PC-3 (cell line): ENCODE measurements at regions of chr18 and their contacts with region 1.

Region 1: DNA sequence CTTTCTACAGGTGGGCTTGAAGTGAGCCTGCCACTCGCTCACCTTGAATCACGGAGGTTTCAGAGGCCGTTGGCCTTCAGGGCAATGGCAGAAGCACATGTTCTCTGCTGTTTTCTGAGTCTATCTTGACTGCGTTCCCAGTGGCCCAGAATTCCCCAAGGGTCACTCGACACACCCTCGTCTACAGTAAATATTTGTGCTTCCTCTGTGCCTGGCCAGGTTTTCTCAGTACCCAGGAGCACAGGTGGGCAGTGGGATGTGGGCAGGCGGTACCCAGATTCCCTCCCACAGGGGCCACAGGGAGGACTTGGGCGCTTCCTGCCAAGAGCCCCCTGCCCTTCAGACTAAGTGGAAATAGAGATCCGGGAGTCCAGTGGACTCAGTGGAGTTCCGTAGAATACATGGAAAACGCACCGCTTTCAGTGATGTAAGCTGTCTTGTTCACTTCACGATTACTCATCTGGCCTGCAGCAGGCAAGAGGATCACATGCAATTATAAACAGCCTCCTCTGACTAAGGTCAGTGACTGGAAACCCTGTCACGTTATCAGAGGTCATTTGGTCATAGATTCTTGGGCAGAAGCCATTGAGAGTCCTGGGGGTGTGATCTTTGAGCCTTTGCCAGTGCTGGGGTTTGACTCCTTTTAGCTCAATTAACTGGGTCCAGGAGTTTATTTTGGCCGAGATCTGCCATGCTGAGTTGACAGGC is 179.8 kb downstream of the NEDD4L start:
- DNase-seq: peak; percentile 91
- ATAC-seq: peak; percentile 72
- H3K4me3 ChIP-seq: peak overlapping the region; percentile 93
- H3K27ac ChIP-seq: peak overlapping the region; percentile 86
- H3K4me1 ChIP-seq: peaks cover 54% of the 10 kb centered on the region
- H3K27me3 ChIP-seq: no peaks in the 10 kb centered on the region
- CTCF ChIP-seq: no peak

Region 2: DNA sequence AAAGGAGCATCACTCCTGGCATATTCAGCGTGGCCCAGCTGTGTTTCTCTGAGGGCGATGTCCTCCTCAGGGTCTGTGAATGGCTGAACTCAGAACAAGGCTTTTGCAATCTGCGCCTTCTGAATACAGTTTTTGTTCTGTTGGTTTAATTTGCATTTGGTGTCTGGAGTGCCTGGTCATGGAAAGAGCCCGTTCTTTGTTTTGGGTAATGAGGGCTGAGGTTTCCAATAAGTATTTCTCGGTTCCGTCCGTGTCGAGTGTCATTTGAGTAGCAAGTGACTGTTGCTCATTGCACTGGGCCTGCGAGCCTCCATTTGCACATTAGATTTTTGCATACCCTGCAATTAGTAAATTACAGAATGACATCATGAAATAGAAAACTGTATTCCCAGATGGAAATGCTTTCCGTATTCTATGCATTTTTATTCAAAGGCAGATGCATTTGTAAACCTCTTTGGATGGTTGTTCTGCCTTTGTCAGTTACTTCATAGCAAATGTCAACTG is 122.5 kb before region 1 on chr18:
- CTCF ChIA-PET with region 1: no interaction called
- POLR2A ChIA-PET with region 1: no interaction called
- intact Hi-C with region 1: no loop called
- DNase-seq: no peak
- ATAC-seq: no peak
- H3K4me3 ChIP-seq: no peak overlapping the region
- H3K27ac ChIP-seq: no peak overlapping the region
- H3K4me1 ChIP-seq: no peaks in the 10 kb centered on the region
- H3K27me3 ChIP-seq: no peaks in the 10 kb centered on the region
- CTCF ChIP-seq: no peak

Region 3: DNA sequence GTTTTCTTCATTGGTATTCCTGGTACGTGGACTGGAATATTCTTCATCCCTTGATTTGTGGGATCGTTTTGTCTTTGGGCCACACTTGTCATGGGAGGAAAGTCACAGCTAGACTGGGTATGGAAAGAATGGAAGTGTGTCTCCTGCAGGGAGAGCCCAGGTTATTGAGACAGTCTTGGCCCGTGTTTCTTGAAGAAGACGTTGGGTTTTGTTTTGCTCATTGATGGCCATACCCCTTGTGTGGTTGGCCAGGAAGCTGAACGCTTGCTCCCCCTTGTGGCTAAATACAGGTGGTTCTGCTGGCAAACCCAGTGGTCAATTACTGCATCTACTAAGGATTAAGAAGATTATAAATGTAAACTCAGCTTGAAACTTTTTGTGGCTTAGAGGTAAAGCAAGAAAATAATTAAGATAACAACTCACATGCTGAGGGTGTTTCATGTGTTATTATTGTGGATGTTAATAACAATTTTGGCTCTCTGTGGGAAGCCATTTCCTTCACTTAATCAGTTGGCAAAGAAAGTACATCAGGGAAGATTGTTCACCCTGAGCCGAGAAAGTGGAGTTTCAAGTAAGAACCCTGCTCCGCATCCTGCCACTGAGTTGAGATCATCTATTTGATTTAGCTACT is 88.1 kb before region 1 on chr18:
- CTCF ChIA-PET with region 1: no interaction called
- POLR2A ChIA-PET with region 1: no interaction called
- intact Hi-C with region 1: loop called (anchors 5 kb)
- DNase-seq: peak; percentile 77
- ATAC-seq: peak; percentile 78
- H3K4me3 ChIP-seq: no peak overlapping the region
- H3K27ac ChIP-seq: no peak overlapping the region
- H3K4me1 ChIP-seq: peaks cover 21% of the 10 kb centered on the region
- H3K27me3 ChIP-seq: no peaks in the 10 kb centered on the region
- CTCF ChIP-seq: peak; percentile 91

Region 4: GRCh38 chr18:58213440-58213839 is 10.4 kb before region 1 on chr18:
- CTCF ChIA-PET with region 1: interaction called, 3 read pairs
- POLR2A ChIA-PET with region 1: interaction called, 14 read pairs
- intact Hi-C with region 1: no loop called
- DNase-seq: peak; percentile 84
- ATAC-seq: peak; percentile 49
- H3K4me3 ChIP-seq: no peak overlapping the region
- H3K27ac ChIP-seq: peak overlapping the region; percentile 41
- H3K4me1 ChIP-seq: peaks cover 82% of the 10 kb centered on the region
- H3K27me3 ChIP-seq: no peaks in the 10 kb centered on the region
- CTCF ChIP-seq: no peak

Region 5: GRCh38 chr18:58263055-58263957 is 39.4 kb after region 1 on chr18:
- CTCF ChIA-PET with region 1: no interaction called
- POLR2A ChIA-PET with region 1: interaction called, 4 read pairs
- intact Hi-C with region 1: loop called (anchors 1 kb)
- DNase-seq: peak; percentile 85
- ATAC-seq: peak; percentile 87
- H3K4me3 ChIP-seq: peak overlapping the region; percentile 56
- H3K27ac ChIP-seq: peak overlapping the region; percentile 85
- H3K4me1 ChIP-seq: peaks cover 54% of the 10 kb centered on the region
- H3K27me3 ChIP-seq: no peaks in the 10 kb centered on the region
- CTCF ChIP-seq: no peak

Region 6: DNA sequence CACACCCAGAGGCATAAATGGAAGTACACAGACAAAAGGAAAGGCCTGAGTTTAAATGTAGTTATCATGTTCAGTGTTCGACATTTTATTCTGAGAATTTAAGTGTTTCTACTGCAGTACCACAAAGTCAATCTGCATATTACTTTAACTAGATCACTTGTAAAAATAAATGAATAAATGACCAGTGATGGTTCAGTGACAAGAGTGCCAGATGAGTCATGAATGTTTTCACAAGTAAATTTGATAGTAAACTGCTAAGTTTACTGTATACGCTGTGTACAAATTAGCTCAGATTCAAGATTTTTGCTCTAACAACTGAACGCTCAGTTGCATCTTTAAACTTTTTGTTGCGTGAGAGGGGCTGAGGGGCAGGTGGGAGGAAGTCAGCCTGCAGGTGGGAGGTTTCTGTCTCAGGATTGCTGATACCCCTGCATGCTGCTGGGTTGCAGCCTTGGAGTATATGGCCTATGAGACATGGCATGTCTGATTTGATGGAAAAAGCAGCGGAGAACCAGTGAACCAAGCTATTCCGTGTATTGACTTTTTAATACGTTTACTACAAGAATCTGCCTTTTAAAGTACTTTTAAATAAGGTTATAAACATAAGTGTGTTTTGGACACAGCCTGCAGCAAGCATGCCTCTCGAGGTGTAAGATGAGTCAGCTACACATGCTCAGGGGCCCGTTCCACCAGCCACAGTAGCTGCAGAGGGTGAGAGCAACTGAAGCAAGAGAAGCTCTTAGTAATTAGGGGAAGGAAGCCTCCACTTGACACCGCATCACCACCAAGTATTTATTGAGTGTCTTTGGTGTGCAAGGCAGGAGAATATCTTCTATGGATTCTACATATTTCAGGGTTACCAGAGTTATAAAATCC is 65.3 kb after region 1 on chr18:
- CTCF ChIA-PET with region 1: no interaction called
- POLR2A ChIA-PET with region 1: interaction called, 4 read pairs
- intact Hi-C with region 1: loop called (anchors 5 kb)
- DNase-seq: peak; percentile 49
- ATAC-seq: peak; percentile 73
- H3K4me3 ChIP-seq: no peak overlapping the region
- H3K27ac ChIP-seq: peak overlapping the region; percentile 36
- H3K4me1 ChIP-seq: peaks cover 49% of the 10 kb centered on the region
- H3K27me3 ChIP-seq: no peaks in the 10 kb centered on the region
- CTCF ChIP-seq: no peak

Region 7: DNA sequence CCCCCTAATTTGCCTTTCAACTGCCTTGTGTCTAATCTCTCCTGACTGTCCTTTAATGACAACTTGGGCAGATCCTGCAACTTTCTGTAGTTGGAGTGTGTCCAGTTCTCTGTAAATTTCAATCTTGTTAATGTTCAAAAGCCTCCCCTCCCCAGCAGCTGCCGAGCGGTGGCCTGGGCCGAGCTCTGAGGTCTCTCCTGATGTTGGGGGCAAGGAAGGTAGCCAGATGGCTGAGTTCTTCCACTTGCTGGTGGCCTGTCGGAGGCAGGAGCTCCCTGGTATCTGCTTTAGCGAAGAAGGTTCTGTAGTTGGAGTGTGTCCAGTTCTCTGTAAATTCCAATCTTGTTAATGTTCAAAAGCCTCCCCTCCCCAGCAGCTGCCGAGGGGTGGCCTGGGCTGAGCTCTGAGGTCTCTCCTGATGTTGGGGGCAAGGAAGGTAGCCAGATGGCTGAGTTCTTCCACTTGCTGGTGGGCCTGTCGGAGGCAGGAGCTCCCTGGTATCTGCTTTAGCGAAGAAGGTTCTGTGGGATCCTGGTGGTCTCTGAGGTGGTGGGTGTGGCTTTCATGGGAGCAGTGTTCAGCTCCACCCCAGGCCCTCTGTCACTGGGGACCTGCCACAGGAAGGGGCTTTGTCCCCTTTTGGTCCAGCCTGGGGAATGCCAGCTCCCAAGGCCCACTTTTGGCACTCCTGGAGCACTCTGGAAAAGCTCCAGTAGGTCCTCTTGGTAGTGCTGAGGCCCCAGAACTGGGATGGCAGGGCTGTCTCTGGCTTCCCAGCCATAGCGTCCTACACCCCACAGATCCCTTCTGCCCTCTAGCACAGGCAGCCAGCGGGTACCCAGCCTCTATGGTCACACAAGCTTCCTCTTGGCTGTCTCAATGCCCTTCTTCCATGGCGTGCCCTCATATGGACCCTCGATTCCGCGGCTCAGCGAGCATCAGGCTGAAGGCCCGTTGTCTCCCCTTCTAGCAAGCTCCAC is 193.1 kb after region 1 on chr18:
- CTCF ChIA-PET with region 1: no interaction called
- POLR2A ChIA-PET with region 1: no interaction called
- intact Hi-C with region 1: no loop called
- DNase-seq: peak; percentile 41
- ATAC-seq: peak; percentile 20
- H3K4me3 ChIP-seq: no peak overlapping the region
- H3K27ac ChIP-seq: peak overlapping the region; percentile 74
- H3K4me1 ChIP-seq: peaks cover 23% of the 10 kb centered on the region
- H3K27me3 ChIP-seq: no peaks in the 10 kb centered on the region
- CTCF ChIP-seq: no peak